Motor neuron (in vitro differentiated cells): ENCODE measurements at regions of chr4 and their contacts with region 1.

Region 1: GRCh38 chr4:89434364-89434988 is 126.9 kb upstream of the GPRIN3 start:
- ATAC-seq: peak in 7 of 8 experiments; percentile 44 to 89 (median 68)
- H3K4me3 ChIP-seq: no peak overlapping the region
- H3K27ac ChIP-seq: no peak overlapping the region
- H3K4me1 ChIP-seq: peaks cover 0 to 3% of the 10 kb centered on the region in 2 donors

Region 2: DNA sequence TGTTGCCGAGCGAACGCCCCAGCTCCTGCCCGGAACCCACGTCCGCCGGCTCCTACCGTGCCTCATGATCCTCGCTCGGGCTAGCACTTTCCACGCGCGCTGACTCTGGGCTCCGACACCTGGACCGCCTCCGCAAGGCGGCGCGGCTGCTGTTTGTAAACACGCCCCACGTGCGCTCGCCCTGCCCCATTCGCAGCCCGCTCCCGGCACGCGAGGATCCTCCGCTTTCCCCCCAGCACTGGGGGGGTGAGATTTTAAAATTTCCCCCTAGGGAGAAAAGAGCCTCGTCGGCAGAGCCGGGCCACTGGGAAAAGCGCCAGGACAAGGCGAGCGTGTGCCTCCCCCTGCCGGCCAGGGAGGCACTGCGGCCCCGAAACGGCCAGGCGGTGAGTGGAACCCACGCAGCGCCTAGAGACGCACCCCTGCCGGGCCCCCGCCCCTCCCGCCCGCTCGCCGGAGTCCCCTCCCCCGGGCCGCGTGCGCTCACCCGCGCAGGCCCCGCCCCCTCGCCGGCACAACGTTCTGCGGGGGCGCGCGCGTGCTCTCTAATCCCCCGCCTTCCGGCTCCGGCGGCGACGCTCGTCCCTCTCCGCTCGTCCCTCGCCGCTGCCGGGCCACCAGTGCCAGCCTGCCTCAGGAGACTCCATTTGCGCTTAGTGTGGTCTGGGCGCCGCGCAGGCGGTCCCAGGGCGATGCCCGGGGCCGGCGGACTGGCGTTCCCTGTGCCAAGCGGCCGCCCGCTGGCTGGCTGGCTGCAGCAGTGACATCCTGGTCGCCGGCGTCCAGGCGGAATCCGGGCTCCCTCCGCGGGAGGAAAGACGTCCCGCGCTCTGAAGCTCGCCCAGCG is 323.3 kb before region 1 on chr4 and contains the start of gene TIGD2:
- in situ Hi-C with region 1: no loop called
- ATAC-seq: peak; percentile 88 to 95 (median 94)
- H3K4me3 ChIP-seq: peak within 1 kb of the TSS; percentile 69 to 97 (median 88)
- H3K27ac ChIP-seq: peak within 1 kb of the TSS; percentile 76
- H3K4me1 ChIP-seq: peaks cover 0 to 8% of the 10 kb centered on the region in 2 donors
- total RNA-seq, gene TIGD2: 7.4 to 14.2 (median 10.8) TPM

Region 3: DNA sequence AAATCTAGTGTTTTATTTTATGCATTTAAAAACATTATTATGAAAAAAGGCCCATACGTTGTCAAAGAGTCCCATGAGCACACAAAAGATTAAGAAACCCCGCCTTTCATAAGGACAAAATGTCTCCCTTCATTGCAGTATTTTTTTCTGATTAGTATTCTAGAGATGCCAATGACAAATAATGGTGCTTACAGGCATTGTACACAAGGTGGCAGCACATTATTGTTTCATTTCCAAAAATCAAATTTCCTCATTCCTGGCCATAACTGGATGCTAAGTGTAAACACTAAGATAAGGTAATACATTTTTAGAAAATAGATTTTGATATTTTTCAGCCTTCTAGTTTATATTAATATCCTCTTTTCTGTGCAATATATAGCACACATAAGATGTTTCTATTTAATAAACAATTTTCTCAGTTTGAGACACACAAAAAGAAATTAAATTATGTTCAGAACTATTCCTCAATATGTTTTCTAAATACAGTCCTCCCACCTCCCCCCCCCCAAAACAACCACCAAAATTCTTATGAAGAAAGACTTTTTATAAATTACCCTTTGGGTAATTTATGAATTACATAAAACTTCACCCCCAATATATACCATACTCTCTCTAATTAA is 275.5 kb before region 1 on chr4:
- in situ Hi-C with region 1: loop called in 3 of 9 experiments (anchors 10 to 25 kb)
- ATAC-seq: peak; percentile 35 to 61 (median 50)
- H3K4me3 ChIP-seq: no peak overlapping the region
- H3K27ac ChIP-seq: no peak overlapping the region
- H3K4me1 ChIP-seq: peaks cover 0 to 5% of the 10 kb centered on the region in 2 donors

Region 4: GRCh38 chr4:89226665-89227574 is 207.6 kb before region 1 on chr4:
- in situ Hi-C with region 1: loop called in 3 of 9 experiments (anchors 10 to 25 kb)
- ATAC-seq: peak; percentile 62 to 100 (median 92)
- H3K4me3 ChIP-seq: no peak overlapping the region
- H3K27ac ChIP-seq: no peak overlapping the region
- H3K4me1 ChIP-seq: peaks cover 2 to 3% of the 10 kb centered on the region in 2 donors

Region 5: DNA sequence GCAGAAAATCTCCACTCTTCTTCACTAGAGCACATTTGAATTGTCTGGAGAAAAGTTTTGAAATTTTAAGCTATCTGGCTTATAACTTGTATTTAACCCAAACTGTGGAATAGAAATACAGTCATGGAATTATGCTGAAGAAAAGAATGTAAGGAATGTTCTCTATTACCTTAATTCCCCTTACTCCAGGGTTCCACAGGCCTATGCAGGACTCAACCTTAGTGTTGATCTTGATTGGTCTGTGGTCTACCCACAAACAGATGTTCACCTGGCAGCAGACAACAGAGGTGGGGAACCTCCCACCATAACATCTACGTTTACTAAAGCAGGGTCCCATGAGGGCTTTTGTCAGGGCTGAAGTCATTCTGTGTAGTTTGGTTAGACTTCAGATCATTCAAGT is 62.4 kb after region 1 on chr4:
- in situ Hi-C with region 1: no loop called
- ATAC-seq: no peak
- H3K4me3 ChIP-seq: no peak overlapping the region
- H3K27ac ChIP-seq: no peak overlapping the region
- H3K4me1 ChIP-seq: peaks cover 11 to 16% of the 10 kb centered on the region in 2 donors

Region 6: GRCh38 chr4:89645482-89645881 is 211.0 kb after region 1 on chr4:
- in situ Hi-C with region 1: no loop called
- ATAC-seq: no peak
- H3K4me3 ChIP-seq: no peak overlapping the region
- H3K27ac ChIP-seq: no peak overlapping the region
- H3K4me1 ChIP-seq: no peaks in the 10 kb centered on the region